Uterus (tissue), 4 donors: ENCODE measurements at regions of chrX and their contacts with region 1.

Region 1: GRCh38 chrX:153763989-153764755 is at the start of gene PLXNB3:
- DNase-seq: peak; percentile 70 to 81
- H3K4me3 ChIP-seq: peak within 1 kb of the TSS in 1 of 2 donors; percentile 13
- H3K27ac ChIP-seq: peak within 1 kb of the TSS; percentile 25 to 77
- H3K4me1 ChIP-seq: no peaks in the 10 kb centered on the region
- H3K27me3 ChIP-seq: no peaks in the 10 kb centered on the region
- CTCF ChIP-seq: peak; percentile 74 to 89 (median 80)
- POLR2A ChIP-seq: peak in 1 of 2 donors; percentile 29
- total RNA-seq, gene PLXNB3: 1.5 to 50.7 (median 5.1) TPM

Region 2: DNA sequence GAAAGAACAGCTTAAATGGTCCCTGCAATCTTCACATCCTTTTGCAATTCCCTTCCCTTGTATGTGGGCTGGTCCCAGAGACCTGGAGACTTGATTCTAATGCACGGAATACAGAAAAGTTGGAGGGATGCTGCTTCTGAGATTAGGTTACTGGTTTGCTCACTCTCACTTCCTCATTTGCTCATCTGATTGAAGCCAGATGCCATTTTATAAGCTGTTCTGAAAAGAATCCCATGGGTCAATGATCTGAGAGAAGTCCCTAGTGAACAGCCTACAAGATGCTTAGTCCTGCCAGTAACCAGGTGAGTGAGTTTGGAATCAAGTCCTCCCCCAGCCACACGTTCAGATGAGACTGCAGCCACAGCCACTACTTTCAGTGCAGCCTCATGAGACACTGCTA is 549.2 kb before region 1 on chrX:
- intact Hi-C with region 1: no loop called
- DNase-seq: no peak
- H3K4me3 ChIP-seq: no peak overlapping the region
- H3K27ac ChIP-seq: no peak overlapping the region
- H3K4me1 ChIP-seq: no peaks in the 10 kb centered on the region
- H3K27me3 ChIP-seq: no peaks in the 10 kb centered on the region
- CTCF ChIP-seq: no peak
- POLR2A ChIP-seq: no peak

Region 3: DNA sequence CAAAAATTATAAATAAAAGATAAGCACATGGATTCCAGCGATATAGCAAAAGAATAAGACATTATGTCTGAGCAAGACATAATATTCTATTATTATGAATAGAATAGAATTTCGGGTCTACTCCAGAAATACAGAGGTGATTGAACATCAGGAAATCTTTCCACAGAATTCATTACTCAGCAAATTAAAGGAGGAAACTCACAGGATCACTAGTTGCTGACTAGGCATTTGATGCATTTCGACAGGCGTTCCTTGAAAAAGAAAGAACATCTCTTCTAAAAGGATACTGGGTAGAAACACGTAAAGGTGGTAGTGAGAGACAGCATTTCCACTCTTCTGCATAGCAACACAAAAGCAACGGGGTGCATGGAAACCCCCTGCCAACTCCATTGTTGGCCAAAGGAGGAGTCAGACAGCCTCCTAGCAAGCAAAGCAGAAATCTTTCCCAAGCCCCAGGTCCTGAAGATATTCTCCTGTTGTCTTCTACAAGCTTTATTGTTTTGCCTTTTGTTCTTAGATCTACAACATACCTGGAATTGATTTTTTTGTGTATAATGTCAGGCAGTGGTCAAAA is 80.4 kb after region 1 on chrX:
- intact Hi-C with region 1: loop called (anchors 2 kb)
- DNase-seq: no peak
- H3K4me3 ChIP-seq: no peak overlapping the region
- H3K27ac ChIP-seq: no peak overlapping the region
- H3K4me1 ChIP-seq: no peaks in the 10 kb centered on the region
- H3K27me3 ChIP-seq: no peaks in the 10 kb centered on the region
- CTCF ChIP-seq: no peak
- POLR2A ChIP-seq: no peak

Region 4: DNA sequence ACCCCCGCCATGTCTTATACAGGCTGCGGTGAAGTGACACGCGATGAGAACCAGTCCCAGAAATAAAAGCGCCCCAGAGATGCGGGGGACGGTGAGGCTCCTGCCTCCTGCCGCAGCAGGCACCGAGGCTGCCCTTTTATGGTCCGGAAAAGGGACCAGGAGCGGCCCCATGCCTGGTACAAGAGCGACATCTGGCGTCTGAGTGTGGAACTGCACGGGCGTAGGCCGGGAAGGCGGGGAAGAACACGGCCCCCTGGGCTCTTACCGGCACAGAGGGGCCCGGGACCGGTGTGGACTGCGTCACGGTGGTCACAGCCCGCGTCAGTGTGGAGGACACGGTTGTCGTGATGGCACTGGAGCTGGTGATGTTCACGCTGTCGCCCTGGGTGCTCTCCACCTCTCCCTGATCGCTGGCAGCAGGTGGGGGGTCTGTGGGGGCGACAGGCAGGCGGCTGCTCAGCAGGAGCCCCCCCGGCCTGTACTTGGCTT is 189.2 kb after region 1 on chrX:
- intact Hi-C with region 1: loop called (anchors 5 kb)
- DNase-seq: peak; percentile 86 to 88
- H3K4me3 ChIP-seq: peak overlapping the region in 1 of 2 donors; percentile 4
- H3K27ac ChIP-seq: peak overlapping the region; percentile 79 to 88
- H3K4me1 ChIP-seq: no peaks in the 10 kb centered on the region
- H3K27me3 ChIP-seq: no peaks in the 10 kb centered on the region
- CTCF ChIP-seq: peak; percentile 98 to 99 (median 98)
- POLR2A ChIP-seq: peak in 1 of 2 donors; percentile 24